ENCODE measurements at regions of chr2 and their contacts with region 1.

Region 1: GRCh38 chr2:201633661-201634249 is 9.5 kb downstream of the TMEM237 start:
- DNase-seq: peak; percentile 28
- ATAC-seq: peak; percentile 21; the same call in 1 of the 2 replicates
- H3K4me3 ChIP-seq: no peak overlapping the region
- H3K27ac ChIP-seq: no peak overlapping the region
- H3K4me1 ChIP-seq: no peaks in the 10 kb centered on the region
- H3K27me3 ChIP-seq: no peaks in the 10 kb centered on the region
- CTCF ChIP-seq: no peak
- POLR2A ChIP-seq: no peak
- RAD21 ChIP-seq: no peak

Region 2: GRCh38 chr2:201396595-201396994 is 237.2 kb before region 1 on chr2:
- CTCF ChIA-PET with region 1: no interaction called
- POLR2A ChIA-PET with region 1: no interaction called
- dilution Hi-C with region 1: no loop called
- in situ Hi-C with region 1: no loop called
- intact Hi-C with region 1: loop called (anchors 5 kb)
- DNase-seq: peak; percentile 12
- ATAC-seq: no peak
- H3K4me3 ChIP-seq: no peak overlapping the region
- H3K27ac ChIP-seq: no peak overlapping the region
- H3K4me1 ChIP-seq: no peaks in the 10 kb centered on the region
- H3K27me3 ChIP-seq: no peaks in the 10 kb centered on the region
- CTCF ChIP-seq: no peak
- POLR2A ChIP-seq: no peak
- RAD21 ChIP-seq: no peak

Region 3: GRCh38 chr2:202716114-202716718 is 1082.5 kb after region 1 on chr2:
- CTCF ChIA-PET with region 1: no interaction called
- POLR2A ChIA-PET with region 1: no interaction called
- dilution Hi-C with region 1: no loop called
- in situ Hi-C with region 1: no loop called
- intact Hi-C with region 1: no loop called
- DNase-seq: peak; percentile 4
- ATAC-seq: no peak
- H3K4me3 ChIP-seq: no peak overlapping the region
- H3K27ac ChIP-seq: no peak overlapping the region
- H3K4me1 ChIP-seq: no peaks in the 10 kb centered on the region
- H3K27me3 ChIP-seq: no peaks in the 10 kb centered on the region
- CTCF ChIP-seq: no peak
- POLR2A ChIP-seq: no peak
- RAD21 ChIP-seq: no peak